Dendritic cell treated with granulocyte-macrophage colony-stimulating factor and Interleukin-4, amounts not matched to agents 40 ng/mL and 50 ng/mL, for 4 days (primary cell): ENCODE measurements at regions of chr5 and their contacts with region 1.

Region 1: DNA sequence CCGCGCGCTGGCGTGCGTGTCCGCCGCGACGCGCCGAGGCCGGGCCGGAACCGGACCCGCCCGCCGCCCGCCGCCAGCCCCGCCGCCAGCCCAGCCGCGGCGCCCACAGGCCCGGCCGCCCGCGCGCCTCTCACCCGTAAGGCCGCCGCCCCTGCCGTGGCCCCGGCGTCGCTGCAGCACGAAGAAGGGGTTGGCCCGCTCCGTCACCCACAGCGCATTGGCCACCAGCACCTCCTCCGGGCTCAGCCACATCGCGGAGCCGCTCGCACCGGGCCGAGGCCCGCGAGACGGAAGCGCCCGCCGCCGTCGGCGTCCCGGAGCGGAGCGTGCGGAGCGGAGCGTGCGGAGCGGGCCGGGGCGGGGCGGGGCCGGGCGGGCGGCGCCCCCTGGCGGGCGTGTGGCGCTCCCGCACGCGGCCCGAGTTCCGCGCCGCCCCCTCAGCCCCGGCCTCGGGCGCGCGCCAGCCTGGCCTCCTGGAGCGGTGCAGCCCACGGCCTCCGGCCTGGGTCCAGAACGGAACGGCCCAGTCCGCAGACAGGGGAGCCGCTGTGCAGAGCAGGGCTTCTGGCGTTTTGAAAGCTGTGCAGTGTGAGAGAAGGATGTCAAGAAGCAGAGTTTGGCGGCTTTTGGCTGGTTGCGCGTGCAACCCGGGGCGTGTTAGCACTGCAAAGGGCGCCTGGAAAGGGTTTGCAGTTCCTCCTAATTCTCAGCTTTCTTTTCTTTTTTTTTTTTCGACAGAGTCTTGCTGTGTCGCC is at the start of gene TBC1D9B:
- H3K4me3 Mint-ChIP-seq: peak within 1 kb of the TSS; percentile 95
- H3K27ac Mint-ChIP-seq: peak within 1 kb of the TSS; percentile 92
- H3K4me1 Mint-ChIP-seq: peaks cover 49% of the 10 kb centered on the region
- H3K27me3 Mint-ChIP-seq: no peaks in the 10 kb centered on the region

Region 2: GRCh38 chr5:179858586-179859427 is 48.9 kb before region 1 on chr5 and contains the start of gene MRNIP:
- intact Hi-C with region 1: loop called (anchors 5 kb)
- H3K4me3 Mint-ChIP-seq: peak within 1 kb of the TSS; percentile 99
- H3K27ac Mint-ChIP-seq: peak within 1 kb of the TSS; percentile 91
- H3K4me1 Mint-ChIP-seq: peaks cover 30% of the 10 kb centered on the region
- H3K27me3 Mint-ChIP-seq: no peaks in the 10 kb centered on the region